ENCODE measurements at regions of chr3 and their contacts with region 1.

Region 1: GRCh38 chr3:185954366-185954723 is 16.5 kb upstream of the TRA2B start:
- DNase-seq: no peak
- H3K4me3 ChIP-seq: no peak overlapping the region
- H3K27ac ChIP-seq: no peak overlapping the region
- H3K4me1 ChIP-seq: no peaks in the 10 kb centered on the region
- H3K27me3 ChIP-seq: no peaks in the 10 kb centered on the region
- CTCF ChIP-seq: no peak
- EP300 ChIP-seq: no peak
- POLR2A ChIP-seq: no peak
- RAD21 ChIP-seq: no peak

Region 2: GRCh38 chr3:185968168-185968567 is 13.8 kb after region 1 on chr3:
- CTCF ChIA-PET with region 1: interaction called, 10 read pairs
- POLR2A ChIA-PET with region 1: no interaction called
- DNase-seq: no peak
- H3K4me3 ChIP-seq: no peak overlapping the region
- H3K27ac ChIP-seq: no peak overlapping the region
- H3K4me1 ChIP-seq: no peaks in the 10 kb centered on the region
- H3K27me3 ChIP-seq: no peaks in the 10 kb centered on the region
- CTCF ChIP-seq: peak in 2 of 3 experiments; percentile 22 to 27; a peak in 2 of 4 replicates
- EP300 ChIP-seq: no peak
- POLR2A ChIP-seq: no peak
- RAD21 ChIP-seq: peak; percentile 7 to 22; a peak in 1 of 4 replicates

Measured in H1 (cell line).